ENCODE measurements at regions of chr10 and their contacts with region 1.

Region 1: DNA sequence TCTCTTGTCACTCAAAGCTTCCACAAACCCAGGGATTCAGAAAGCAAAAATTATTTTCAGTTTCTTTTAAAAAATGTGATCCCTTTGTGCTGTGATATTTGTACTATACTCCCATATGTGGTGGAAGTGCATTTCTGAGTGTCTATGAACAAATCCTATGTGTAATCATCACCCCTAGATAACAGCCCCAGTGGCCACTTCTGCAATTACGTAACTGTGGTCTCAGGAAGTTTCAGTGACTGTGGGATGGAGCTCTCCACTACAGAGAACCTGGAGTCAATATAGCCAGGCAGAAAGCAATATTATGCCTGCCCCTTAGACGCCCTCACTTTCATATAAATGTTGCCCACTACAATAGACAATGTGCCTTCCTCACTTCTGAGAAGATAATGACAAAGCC is 1101.7 kb upstream of the GHITM start:
- DNase-seq: no peak
- H3K4me3 ChIP-seq: no peak overlapping the region
- H3K27ac ChIP-seq: no peak overlapping the region
- H3K4me1 ChIP-seq: no peaks in the 10 kb centered on the region
- H3K27me3 ChIP-seq: no peaks in the 10 kb centered on the region
- CTCF ChIP-seq: no peak
- EP300 ChIP-seq: no peak
- POLR2A ChIP-seq: no peak

Region 2: GRCh38 chr10:82778908-82779307 is 258.7 kb before region 1 on chr10:
- in situ Hi-C with region 1: no loop called
- intact Hi-C with region 1: no loop called
- DNase-seq: no peak
- H3K4me3 ChIP-seq: no peak overlapping the region
- H3K27ac ChIP-seq: no peak overlapping the region
- H3K4me1 ChIP-seq: no peaks in the 10 kb centered on the region
- H3K27me3 ChIP-seq: no peaks in the 10 kb centered on the region
- CTCF ChIP-seq: no peak
- EP300 ChIP-seq: no peak
- POLR2A ChIP-seq: no peak

Region 3: DNA sequence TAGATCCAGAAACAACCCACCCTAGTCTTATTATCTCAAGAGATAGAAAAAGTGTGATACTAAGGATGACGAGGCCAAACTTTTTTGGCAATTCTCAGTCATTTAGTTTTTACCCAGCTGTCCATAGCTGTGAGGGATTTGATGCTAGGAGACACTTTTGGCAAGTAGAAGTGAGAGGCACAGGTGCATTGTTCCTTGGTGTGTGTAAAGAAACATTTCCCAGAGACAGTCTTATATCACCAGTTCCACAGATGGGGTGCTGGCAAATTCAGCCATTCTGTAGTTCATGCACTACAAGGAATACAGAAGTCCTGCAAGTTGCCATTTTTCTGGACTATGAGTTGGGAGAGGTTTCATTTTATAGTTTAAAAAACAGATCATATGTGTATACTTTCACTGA is 698.4 kb after region 1 on chr10:
- in situ Hi-C with region 1: no loop called
- intact Hi-C with region 1: loop called (anchors 5 kb)
- DNase-seq: no peak
- H3K4me3 ChIP-seq: no peak overlapping the region
- H3K27ac ChIP-seq: no peak overlapping the region
- H3K4me1 ChIP-seq: no peaks in the 10 kb centered on the region
- H3K27me3 ChIP-seq: no peaks in the 10 kb centered on the region
- CTCF ChIP-seq: no peak
- EP300 ChIP-seq: no peak
- POLR2A ChIP-seq: no peak

Measured in transverse colon (tissue), 4 donors.